CD4-positive, alpha-beta memory T cell (primary cell): ENCODE measurements at regions of chr19 and their contacts with region 1.

Region 1: DNA sequence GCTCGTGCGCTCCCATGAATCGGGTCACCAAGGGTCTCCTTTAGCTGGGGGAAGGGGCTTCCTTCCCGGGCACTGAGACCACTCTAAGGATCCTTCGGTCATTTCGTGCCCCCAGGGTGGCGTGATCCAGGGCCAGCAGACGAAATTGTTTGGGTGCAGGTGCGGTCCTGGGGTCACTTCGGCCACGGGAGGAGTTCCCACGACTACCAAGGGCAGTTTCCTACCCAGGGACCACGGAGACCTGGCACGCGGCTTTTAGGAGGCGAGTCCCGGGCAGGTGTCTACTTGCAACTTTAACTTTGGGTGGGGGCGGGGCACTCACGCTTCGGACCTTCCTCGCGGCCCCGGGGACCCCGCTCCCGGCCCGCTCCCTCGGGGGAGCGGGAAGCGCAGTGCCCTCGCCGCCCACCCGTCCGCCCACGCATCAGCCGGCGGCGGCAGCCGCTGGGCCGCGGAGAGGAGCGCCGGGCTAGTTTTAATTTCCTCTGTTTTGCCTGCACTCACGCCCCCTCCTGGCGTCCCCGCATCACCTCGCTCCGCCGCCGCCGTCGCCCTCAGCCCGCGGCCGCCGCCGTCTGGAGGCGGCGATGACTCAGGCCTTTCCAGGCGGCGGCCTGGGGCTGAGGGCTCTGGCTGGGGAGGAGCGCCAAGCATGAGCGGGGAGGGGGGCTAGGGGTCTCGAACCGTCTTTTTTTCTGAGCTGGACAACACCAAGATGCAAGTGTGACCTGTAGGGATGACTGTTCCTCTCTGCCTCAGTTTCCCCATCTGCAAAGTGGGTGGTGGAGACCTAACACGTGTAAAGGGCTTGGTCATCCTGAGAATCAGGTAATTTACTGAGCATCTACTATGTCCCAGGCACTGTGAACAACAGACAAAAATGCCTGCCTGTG is 21.8 kb downstream of the OLFM2 start:
- DNase-seq: peak; percentile 74 to 81 (median 77)
- H3K4me3 ChIP-seq: peak overlapping the region; percentile 14 to 64
- H3K4me3 Mint-ChIP-seq: peak overlapping the region; percentile 61 to 81 (median 78)
- H3K27ac ChIP-seq: no peak overlapping the region
- H3K27ac Mint-ChIP-seq: peak overlapping the region in 1 of 7 donors; percentile 30
- H3K4me1 ChIP-seq: peaks cover 15% of the 10 kb centered on the region
- H3K4me1 Mint-ChIP-seq: peaks cover 4 to 18% (median 7%) of the 10 kb centered on the region in 4 donors
- H3K27me3 ChIP-seq: peaks cover 20% of the 10 kb centered on the region
- H3K27me3 Mint-ChIP-seq: peaks cover 18 to 27% of the 10 kb centered on the region in 2 donors

Region 2: GRCh38 chr19:9140159-9140874 is 774.2 kb before region 1 on chr19 and contains the start of gene ZNF317:
- CTCF ChIA-PET with region 1: no interaction called
- POLR2A ChIA-PET with region 1: no interaction called
- intact Hi-C with region 1: loop called (anchors 1 kb)
- DNase-seq: peak; percentile 88 to 95 (median 89)
- H3K4me3 ChIP-seq: peak within 1 kb of the TSS; percentile 82 to 88
- H3K4me3 Mint-ChIP-seq: peak within 1 kb of the TSS; percentile 95 to 99 (median 98)
- H3K27ac ChIP-seq: peak within 1 kb of the TSS; percentile 96
- H3K27ac Mint-ChIP-seq: peak within 1 kb of the TSS; percentile 95 to 99 (median 98)
- H3K4me1 ChIP-seq: peaks cover 25% of the 10 kb centered on the region
- H3K4me1 Mint-ChIP-seq: peaks cover 29 to 48% (median 37%) of the 10 kb centered on the region in 4 donors
- H3K27me3 ChIP-seq: no peaks in the 10 kb centered on the region
- H3K27me3 Mint-ChIP-seq: peaks cover 1 to 2% of the 10 kb centered on the region in 2 donors
- total RNA-seq, gene ZNF317: 52.1 to 52.4 TPM

Region 3: DNA sequence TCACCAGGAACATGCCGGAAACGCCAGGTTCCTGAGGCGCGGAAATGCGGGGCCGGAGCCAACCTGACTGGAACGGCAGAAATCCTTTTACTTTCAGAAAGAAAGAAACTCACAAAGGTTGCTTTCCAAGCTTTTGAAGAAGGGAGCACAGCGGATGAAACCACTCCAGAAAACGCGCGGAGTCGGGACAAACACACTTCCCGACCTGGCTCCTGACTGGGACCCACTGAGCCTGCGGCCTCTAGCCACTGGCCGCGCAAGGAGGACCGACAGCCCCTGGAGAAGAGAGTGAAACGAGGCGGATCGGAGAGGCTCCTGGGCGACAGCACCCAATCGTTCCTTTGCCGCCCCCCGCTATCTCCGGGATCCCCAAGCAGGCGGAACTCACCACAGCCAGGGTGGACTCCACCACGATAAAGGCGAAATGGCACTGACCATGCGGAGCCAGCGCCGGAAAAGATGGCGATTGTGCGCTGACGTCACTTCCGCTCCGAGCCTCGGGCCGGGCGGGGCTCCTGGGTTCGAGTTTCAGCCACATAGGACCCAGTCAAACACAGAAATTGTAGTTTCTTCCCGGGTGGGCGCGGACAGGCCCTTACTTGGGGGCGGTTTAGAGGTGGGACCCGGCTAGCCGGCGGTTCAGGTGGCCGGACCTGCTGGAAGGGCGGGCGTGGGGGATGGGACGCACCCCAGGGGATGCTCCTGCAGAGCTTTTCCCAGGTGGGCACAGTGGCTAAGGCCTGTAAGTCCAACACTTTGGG is 330.3 kb before region 1 on chr19 and contains the start of gene ZNF121:
- CTCF ChIA-PET with region 1: no interaction called
- POLR2A ChIA-PET with region 1: no interaction called
- intact Hi-C with region 1: loop called (anchors 2 kb)
- DNase-seq: peak; percentile 67 to 76 (median 73)
- H3K4me3 ChIP-seq: peak within 1 kb of the TSS; percentile 99 to 100
- H3K4me3 Mint-ChIP-seq: peak within 1 kb of the TSS; percentile 94 to 99 (median 97)
- H3K27ac ChIP-seq: peak within 1 kb of the TSS; percentile 97
- H3K27ac Mint-ChIP-seq: peak within 1 kb of the TSS; percentile 96 to 99 (median 98)
- H3K4me1 ChIP-seq: peaks cover 26% of the 10 kb centered on the region
- H3K4me1 Mint-ChIP-seq: peaks cover 21 to 55% (median 34%) of the 10 kb centered on the region in 4 donors
- H3K27me3 ChIP-seq: no peaks in the 10 kb centered on the region
- H3K27me3 Mint-ChIP-seq: peaks cover 2 to 4% of the 10 kb centered on the region in 2 donors
- total RNA-seq, gene ZNF121: 47.2 to 53.0 TPM

Region 4: DNA sequence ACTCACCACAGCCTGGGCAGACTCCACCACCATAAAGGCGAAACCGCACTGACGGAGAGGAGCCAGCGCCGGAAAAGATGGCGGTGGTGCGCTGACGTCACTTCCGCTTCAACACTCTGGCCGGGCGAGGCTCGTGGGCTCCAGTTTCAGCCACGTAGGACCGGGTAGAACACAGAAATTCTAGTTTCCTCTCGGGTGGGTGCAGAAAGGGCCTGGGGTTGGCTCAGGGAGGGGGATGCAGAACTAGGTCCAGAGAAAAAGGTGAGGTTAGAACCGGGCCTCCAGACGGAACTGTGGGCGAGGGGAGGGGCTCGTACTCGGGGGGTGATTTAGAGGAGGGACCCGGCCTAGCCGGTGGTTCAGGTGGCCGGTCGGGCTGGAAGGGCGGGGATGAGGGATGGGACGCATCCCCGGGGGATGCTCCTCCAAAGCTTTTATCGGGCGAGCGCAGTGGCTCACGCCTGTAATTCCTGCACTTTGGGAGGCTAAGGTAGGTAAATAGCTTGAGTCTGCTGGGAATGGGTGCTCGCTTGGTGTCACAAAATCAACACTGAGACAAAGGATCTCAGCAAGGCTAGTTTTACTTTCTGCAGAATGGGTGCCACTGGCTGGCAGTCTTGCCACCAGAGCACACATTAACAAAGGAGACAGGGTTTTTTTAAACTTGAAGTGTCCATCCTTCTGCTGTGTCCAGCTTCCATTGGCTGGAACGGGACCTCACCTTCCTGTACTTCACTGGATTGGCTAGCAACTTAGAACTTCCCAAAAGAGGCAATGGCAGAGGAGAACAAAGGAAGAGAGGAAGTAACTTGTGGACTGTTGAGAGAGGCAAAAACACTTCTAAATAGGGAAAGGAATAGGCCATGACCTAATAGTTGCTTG is 293.2 kb before region 1 on chr19 and contains the start of gene ZNF561:
- CTCF ChIA-PET with region 1: no interaction called
- POLR2A ChIA-PET with region 1: no interaction called
- intact Hi-C with region 1: loop called (anchors 1 kb)
- DNase-seq: peak; percentile 89 to 92 (median 90)
- H3K4me3 ChIP-seq: peak within 1 kb of the TSS; percentile 87 to 94
- H3K4me3 Mint-ChIP-seq: peak within 1 kb of the TSS; percentile 96 to 100 (median 99)
- H3K27ac ChIP-seq: peak within 1 kb of the TSS; percentile 88
- H3K27ac Mint-ChIP-seq: peak within 1 kb of the TSS; percentile 100
- H3K4me1 ChIP-seq: peaks cover 21% of the 10 kb centered on the region
- H3K4me1 Mint-ChIP-seq: peaks cover 16 to 29% (median 22%) of the 10 kb centered on the region in 4 donors
- H3K27me3 ChIP-seq: no peaks in the 10 kb centered on the region
- H3K27me3 Mint-ChIP-seq: peaks cover 0 to 3% of the 10 kb centered on the region in 2 donors
- total RNA-seq, gene ZNF561: 67.2 to 75.8 TPM

Region 5: DNA sequence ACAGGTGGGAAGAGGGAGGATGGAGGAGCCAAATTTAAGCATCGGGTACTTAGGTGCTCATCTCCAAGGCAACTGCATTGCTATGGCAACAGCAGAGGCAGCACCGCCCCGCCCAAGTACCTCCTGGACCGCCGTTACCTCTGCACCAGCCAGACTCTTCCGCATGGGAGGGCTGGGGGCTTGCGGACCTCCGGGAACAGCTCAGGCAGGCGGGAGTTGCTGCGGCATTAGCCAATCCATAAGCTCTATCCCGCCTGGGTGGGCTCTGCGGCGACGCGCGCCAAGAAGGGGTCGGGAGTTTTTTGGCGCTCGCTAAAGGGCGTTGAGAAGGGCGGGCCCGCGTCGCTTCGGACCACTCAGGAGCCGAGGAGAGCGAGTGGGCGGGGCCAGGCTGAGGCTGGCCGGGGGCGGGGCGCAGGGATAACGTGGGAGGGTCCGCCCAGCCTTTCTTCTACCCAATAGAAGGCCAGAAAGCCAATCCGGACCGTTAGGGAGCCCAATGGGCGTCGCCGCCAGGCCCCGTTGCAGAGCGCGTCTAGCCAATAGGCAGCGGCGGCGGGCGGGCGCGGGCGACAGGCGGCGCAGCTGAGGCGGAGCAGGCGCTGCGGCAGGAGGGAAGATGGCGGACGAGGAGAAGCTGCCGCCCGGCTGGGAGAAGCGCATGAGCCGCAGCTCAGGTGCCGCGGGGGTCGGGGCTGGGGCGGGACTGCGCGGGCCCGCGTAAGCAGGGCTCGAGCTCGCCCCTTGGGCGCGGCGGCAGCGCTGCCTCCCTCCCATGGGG is 79.6 kb before region 1 on chr19 and contains the start of gene PIN1:
- CTCF ChIA-PET with region 1: interaction called, 3 read pairs
- POLR2A ChIA-PET with region 1: interaction called, 5 read pairs
- intact Hi-C with region 1: loop called (anchors 1 kb)
- DNase-seq: peak; percentile 99 to 100 (median 99)
- H3K4me3 ChIP-seq: peak within 1 kb of the TSS; percentile 55 to 97
- H3K4me3 Mint-ChIP-seq: peak within 1 kb of the TSS; percentile 93 to 97 (median 96)
- H3K27ac ChIP-seq: peak within 1 kb of the TSS; percentile 74
- H3K27ac Mint-ChIP-seq: peak within 1 kb of the TSS; percentile 91 to 99 (median 97)
- H3K4me1 ChIP-seq: peaks cover 14% of the 10 kb centered on the region
- H3K4me1 Mint-ChIP-seq: peaks cover 10 to 34% (median 19%) of the 10 kb centered on the region in 4 donors
- H3K27me3 ChIP-seq: no peaks in the 10 kb centered on the region
- H3K27me3 Mint-ChIP-seq: no peaks in the 10 kb centered on the region
- total RNA-seq, gene PIN1: 72.1 to 76.9 TPM

Region 6: GRCh38 chr19:9848060-9848459 is 66.5 kb before region 1 on chr19:
- CTCF ChIA-PET with region 1: interaction called, 7 read pairs
- POLR2A ChIA-PET with region 1: no interaction called
- intact Hi-C with region 1: loop called (anchors 1 kb)
- DNase-seq: peak in 4 of 5 donors; percentile 31 to 40 (median 37)
- H3K4me3 ChIP-seq: no peak overlapping the region
- H3K4me3 Mint-ChIP-seq: no peak overlapping the region
- H3K27ac ChIP-seq: no peak overlapping the region
- H3K27ac Mint-ChIP-seq: peak overlapping the region in 2 of 7 donors; percentile 15 to 56
- H3K4me1 ChIP-seq: peaks cover 9% of the 10 kb centered on the region
- H3K4me1 Mint-ChIP-seq: peaks cover 15 to 42% (median 22%) of the 10 kb centered on the region in 4 donors
- H3K27me3 ChIP-seq: no peaks in the 10 kb centered on the region
- H3K27me3 Mint-ChIP-seq: no peaks in the 10 kb centered on the region

Region 7: GRCh38 chr19:9857920-9858746 is 56.4 kb before region 1 on chr19:
- CTCF ChIA-PET with region 1: no interaction called
- POLR2A ChIA-PET with region 1: no interaction called
- intact Hi-C with region 1: loop called (anchors 2 kb)
- DNase-seq: peak in 4 of 5 donors; percentile 44 to 60 (median 54)
- H3K4me3 ChIP-seq: peak overlapping the region; percentile 63 to 87
- H3K4me3 Mint-ChIP-seq: peak overlapping the region; percentile 90 to 100 (median 96)
- H3K27ac ChIP-seq: peak overlapping the region; percentile 60
- H3K27ac Mint-ChIP-seq: peak overlapping the region; percentile 86 to 99 (median 97)
- H3K4me1 ChIP-seq: peaks cover 85% of the 10 kb centered on the region
- H3K4me1 Mint-ChIP-seq: peaks cover 42 to 90% (median 65%) of the 10 kb centered on the region in 4 donors
- H3K27me3 ChIP-seq: no peaks in the 10 kb centered on the region
- H3K27me3 Mint-ChIP-seq: no peaks in the 10 kb centered on the region

Region 8: GRCh38 chr19:9877775-9878510 is 36.6 kb before region 1 on chr19:
- CTCF ChIA-PET with region 1: no interaction called
- POLR2A ChIA-PET with region 1: no interaction called
- intact Hi-C with region 1: no loop called
- DNase-seq: no peak
- H3K4me3 ChIP-seq: no peak overlapping the region
- H3K4me3 Mint-ChIP-seq: peak overlapping the region in 1 of 8 donors; percentile 60
- H3K27ac ChIP-seq: no peak overlapping the region
- H3K27ac Mint-ChIP-seq: no peak overlapping the region
- H3K4me1 ChIP-seq: no peaks in the 10 kb centered on the region
- H3K4me1 Mint-ChIP-seq: peaks cover 0 to 2% (median 0%) of the 10 kb centered on the region in 4 donors
- H3K27me3 ChIP-seq: no peaks in the 10 kb centered on the region
- H3K27me3 Mint-ChIP-seq: peaks cover 0 to 2% of the 10 kb centered on the region in 2 donors